ENCODE measurements at regions of chr6 and their contacts with region 1.

Region 1: GRCh38 chr6:158793432-158793831 is 25.7 kb downstream of the EZR start:
- DNase-seq: no peak
- H3K4me3 ChIP-seq: no peak overlapping the region
- H3K27ac ChIP-seq: no peak overlapping the region
- H3K4me1 ChIP-seq: peaks cover 0 to 9% (median 5%) of the 10 kb centered on the region in 4 experiments; a peak in 6 of 7 replicates
- H3K27me3 ChIP-seq: no peaks in the 10 kb centered on the region
- CTCF ChIP-seq: peak in 2 of 3 experiments; percentile 30 to 57; a peak in 3 of 4 replicates
- EP300 ChIP-seq: no peak
- POLR2A ChIP-seq: no peak
- RAD21 ChIP-seq: peak; percentile 66 to 72

Region 2: DNA sequence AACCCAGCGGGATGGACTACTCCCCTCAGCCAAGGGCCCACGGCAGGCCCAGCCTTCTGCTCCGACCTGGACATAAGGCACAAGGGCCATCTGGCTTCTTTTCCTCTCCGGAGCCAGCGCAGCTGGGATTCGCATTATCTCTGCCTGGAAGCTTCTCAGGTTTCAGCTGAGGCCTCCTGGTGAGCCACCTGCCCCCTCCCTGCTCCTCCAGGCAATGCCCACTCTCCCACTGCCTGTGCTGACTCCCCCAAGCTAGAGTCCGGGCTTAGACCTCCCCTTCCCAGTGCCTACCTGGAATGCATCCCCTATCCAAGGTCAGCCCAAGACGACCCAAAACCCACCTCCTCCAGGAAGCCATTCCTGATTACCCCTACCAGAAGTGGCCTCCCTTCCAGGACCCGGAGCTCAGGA is 35.0 kb before region 1 on chr6:
- CTCF ChIA-PET with region 1: no interaction called
- POLR2A ChIA-PET with region 1: interaction called, 11 read pairs
- DNase-seq: peak; percentile 34 to 71
- H3K4me3 ChIP-seq: no peak overlapping the region
- H3K27ac ChIP-seq: no peak overlapping the region
- H3K4me1 ChIP-seq: peaks cover 0 to 20% (median 10%) of the 10 kb centered on the region in 4 experiments; a peak in 6 of 7 replicates
- H3K27me3 ChIP-seq: no peaks in the 10 kb centered on the region
- CTCF ChIP-seq: no peak
- EP300 ChIP-seq: no peak
- POLR2A ChIP-seq: no peak
- RAD21 ChIP-seq: no peak

Region 3: DNA sequence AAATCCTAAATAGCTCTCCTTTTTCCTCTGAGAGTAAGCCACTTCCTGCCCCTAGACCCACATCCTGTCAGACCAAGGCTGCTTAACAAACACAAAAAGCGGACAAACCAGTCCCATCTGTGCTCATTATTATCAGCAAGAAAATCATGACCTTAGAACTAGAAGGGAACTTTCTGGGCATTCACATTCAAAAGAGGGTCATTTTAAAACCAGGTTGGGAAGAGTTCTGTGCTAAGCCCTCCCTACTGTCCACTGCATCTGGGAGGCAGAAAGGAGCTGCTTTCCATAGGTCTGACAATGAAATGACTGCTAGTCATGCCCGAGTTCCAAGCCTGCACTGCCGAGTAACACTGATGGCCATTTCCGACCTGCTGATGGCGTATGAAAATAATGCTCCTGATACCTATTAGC is 10.3 kb after region 1 on chr6:
- CTCF ChIA-PET with region 1: interaction called, 16 read pairs
- POLR2A ChIA-PET with region 1: interaction called, 31 read pairs
- DNase-seq: no peak
- H3K4me3 ChIP-seq: no peak overlapping the region
- H3K27ac ChIP-seq: peak overlapping the region; percentile 13; the same call in 1 of the 2 replicates
- H3K4me1 ChIP-seq: peaks cover 16 to 38% (median 24%) of the 10 kb centered on the region in 4 experiments
- H3K27me3 ChIP-seq: no peaks in the 10 kb centered on the region
- CTCF ChIP-seq: no peak
- EP300 ChIP-seq: no peak
- POLR2A ChIP-seq: 0 out of 3 replicates have a peak, but pooled peaks of 1 of the 2 experiments have one; percentile 47
- RAD21 ChIP-seq: no peak

Region 4: DNA sequence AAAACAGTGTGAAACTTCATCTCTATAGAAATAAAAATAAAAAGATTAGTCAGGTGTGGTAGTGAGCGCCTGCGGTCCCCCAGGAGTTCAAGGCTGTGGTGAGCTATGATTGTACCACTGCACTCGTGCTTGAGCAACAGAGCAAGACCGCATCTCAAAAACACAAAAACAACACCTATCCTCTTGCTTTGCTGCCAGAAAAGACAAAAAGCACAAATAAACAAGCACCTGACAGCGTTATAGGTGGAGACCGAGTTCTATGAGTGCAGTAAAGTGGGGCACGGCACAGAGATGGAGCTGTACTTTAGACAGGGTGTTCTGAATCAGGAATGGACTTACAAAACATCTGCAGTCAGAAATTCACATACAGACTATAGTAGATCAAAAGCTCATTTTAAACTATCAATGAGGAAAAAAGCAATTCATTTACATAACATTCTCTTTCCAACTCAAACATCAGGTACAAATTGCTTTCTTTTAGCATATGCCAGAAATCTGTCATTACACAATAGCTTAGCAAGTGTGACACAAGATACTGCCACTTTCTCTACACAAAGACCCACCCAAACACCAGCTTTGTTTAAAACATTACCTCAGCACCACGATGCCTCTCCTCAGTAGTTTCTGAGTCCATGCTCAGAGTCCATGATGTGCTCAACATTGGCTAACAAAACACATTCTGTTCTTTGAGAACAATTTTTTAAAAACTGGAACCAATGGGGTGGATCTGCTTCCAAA is 15.7 kb after region 1 on chr6:
- CTCF ChIA-PET with region 1: interaction called, 16 read pairs
- POLR2A ChIA-PET with region 1: interaction called, 31 read pairs
- DNase-seq: no peak
- H3K4me3 ChIP-seq: no peak overlapping the region
- H3K27ac ChIP-seq: no peak overlapping the region
- H3K4me1 ChIP-seq: peaks cover 11 to 41% (median 37%) of the 10 kb centered on the region in 4 experiments
- H3K27me3 ChIP-seq: no peaks in the 10 kb centered on the region
- CTCF ChIP-seq: no peak
- EP300 ChIP-seq: no peak
- POLR2A ChIP-seq: no peak
- RAD21 ChIP-seq: no peak

Region 5: GRCh38 chr6:158843751-158844683 is 50.6 kb after region 1 on chr6:
- CTCF ChIA-PET with region 1: no interaction called
- POLR2A ChIA-PET with region 1: no interaction called
- DNase-seq: no peak
- H3K4me3 ChIP-seq: no peak overlapping the region
- H3K27ac ChIP-seq: no peak overlapping the region
- H3K4me1 ChIP-seq: no peaks in the 10 kb centered on the region
- H3K27me3 ChIP-seq: no peaks in the 10 kb centered on the region
- CTCF ChIP-seq: no peak
- EP300 ChIP-seq: no peak
- POLR2A ChIP-seq: no peak
- RAD21 ChIP-seq: no peak

Measured in H1 (cell line).